Caco-2 (cell line): ENCODE measurements at regions of chr3 and their contacts with region 1.

Region 1: DNA sequence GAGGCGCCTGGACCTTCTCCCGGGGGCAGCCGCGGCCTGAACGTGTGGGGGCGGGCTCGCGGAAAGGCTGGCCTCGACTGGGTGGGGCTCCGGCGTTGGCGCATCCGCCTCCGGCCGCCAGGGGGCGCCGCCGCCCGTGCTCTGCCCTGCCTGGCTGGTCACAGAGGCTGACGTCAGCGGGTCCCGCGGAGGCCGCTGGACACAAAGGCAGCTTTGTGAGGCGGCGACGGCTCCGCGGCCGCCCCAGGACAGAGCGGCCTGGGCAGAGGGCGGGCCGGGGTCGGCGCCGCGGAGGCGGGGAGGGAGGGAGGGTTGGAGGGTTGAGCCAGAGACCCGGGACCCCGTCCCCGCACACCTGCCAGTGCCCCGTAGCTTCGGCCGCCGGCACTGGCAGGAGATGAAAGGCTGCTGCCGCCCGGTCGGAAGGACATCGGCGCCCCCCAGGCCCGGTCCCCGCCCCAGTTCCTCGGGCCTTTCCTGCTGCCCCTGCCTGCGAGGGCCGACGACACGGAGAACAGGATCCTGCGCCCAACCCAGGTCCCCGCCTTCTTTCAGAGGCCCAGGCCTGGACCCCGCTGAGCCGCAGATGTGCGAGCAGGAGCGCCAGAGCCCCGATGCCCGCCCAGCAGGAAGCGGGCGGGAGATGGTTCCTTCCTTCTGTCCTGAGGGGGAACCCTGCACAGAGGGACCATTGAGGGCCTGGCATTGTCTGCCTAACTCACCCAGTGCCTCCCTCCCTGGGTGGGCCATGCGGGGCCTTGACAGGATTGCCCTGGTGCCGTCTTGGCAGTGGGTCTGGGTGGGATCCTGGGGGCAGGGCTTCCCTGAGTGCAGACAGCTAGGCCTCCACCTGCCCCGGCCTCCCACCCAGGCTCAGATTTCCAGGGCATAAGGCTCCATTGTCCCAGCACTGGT is 8.7 kb upstream of the SEMA3B start:
- DNase-seq: peak; percentile 90 to 95
- H3K4me3 ChIP-seq: peak overlapping the region; percentile 48
- H3K4me3 Mint-ChIP-seq: peak overlapping the region; percentile 63
- H3K27ac Mint-ChIP-seq: peak overlapping the region; percentile 70
- H3K4me1 ChIP-seq: peaks cover 34% of the 10 kb centered on the region
- H3K4me1 Mint-ChIP-seq: peaks cover 12% of the 10 kb centered on the region
- H3K27me3 ChIP-seq: no peaks in the 10 kb centered on the region
- H3K27me3 Mint-ChIP-seq: no peaks in the 10 kb centered on the region
- CTCF ChIP-seq: peak; percentile 80 to 82

Region 2: DNA sequence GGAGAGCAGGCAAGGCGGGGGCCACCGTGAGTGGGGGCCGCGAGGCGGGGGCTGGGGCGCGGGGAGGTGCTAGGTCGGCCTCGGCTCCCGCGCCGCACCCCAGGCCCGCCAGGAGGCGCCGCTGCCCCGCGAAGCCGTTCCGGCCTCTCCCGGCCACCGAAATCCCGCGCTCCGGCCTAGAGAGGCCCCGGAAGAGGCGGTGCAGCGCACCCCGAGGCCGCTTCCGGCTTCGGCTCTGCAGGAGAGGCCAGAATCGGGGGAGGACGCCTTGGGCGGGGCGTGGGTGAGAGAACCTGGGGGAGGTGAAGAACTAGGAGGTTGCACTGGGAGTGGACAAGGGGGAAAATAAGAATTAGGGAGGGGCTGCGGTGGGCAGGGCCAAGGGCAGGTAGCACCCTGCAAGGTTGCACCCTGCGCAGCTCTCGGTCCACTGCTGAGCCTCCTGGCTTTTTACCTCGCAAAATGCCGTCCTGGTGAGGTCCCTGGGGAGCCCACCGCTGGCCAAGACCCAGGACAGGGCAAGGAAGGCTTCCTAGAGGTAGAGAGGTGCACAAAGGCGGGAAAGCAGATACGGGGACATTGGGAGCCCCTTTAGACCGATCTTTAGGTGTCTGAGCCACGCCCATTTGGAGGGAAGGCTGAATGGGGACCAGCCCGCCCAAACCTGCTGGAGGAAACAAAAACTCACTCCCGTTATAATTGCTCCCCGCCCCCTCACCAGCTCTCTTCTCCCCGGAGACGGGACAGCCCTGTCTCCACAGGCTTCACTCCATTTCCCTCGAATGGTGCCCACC is 32.7 kb before region 1 on chr3:
- CTCF ChIA-PET with region 1: interaction called, 9 read pairs
- POLR2A ChIA-PET with region 1: interaction called, 6 read pairs
- intact Hi-C with region 1: loop called (anchors 1 kb)
- DNase-seq: peak; percentile 97
- H3K4me3 ChIP-seq: peak overlapping the region; percentile 72
- H3K4me3 Mint-ChIP-seq: peak overlapping the region; percentile 78
- H3K27ac Mint-ChIP-seq: peak overlapping the region; percentile 78
- H3K4me1 ChIP-seq: peaks cover 6% of the 10 kb centered on the region; the same call in 1 of the 2 replicates
- H3K4me1 Mint-ChIP-seq: no peaks in the 10 kb centered on the region
- H3K27me3 ChIP-seq: no peaks in the 10 kb centered on the region
- H3K27me3 Mint-ChIP-seq: no peaks in the 10 kb centered on the region
- CTCF ChIP-seq: peak; percentile 62 to 82

Region 3: DNA sequence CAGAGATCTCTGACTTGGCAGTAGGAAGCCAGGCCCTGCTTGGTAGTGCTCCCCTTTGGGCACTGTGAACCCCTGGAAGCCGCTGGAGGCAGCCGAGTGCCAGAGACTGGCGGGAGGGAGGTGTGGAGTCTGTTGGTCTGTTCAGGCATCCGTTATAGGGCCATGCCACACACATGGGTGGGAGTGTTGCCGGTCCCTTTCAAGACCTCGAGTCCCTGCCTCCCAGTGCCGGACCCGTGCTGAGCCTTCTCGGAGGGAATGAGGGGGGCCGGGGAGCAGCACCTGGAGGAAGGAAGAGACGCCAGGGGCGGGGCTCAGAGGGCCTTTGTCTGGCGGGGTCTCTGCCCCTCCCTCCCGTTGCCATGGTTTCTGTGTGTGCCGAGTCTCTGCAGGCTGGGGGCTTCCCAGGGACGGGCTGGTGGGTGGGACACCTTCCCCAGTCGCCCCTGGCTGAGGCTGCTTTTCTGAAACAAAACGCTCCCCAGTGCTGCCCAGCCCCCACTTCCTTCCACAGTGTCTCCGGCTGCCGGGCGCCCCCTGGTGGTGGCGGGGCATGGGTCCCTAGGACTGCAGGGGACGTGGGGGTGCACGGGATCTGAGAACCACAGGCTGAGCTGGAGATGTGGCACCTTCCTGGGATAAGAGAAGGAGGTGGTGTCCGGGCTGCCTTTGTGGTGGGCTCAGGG is 14.3 kb before region 1 on chr3:
- CTCF ChIA-PET with region 1: interaction called, 10 read pairs
- POLR2A ChIA-PET with region 1: interaction called, 6 read pairs
- intact Hi-C with region 1: no loop called
- DNase-seq: peak; percentile 81 to 90
- H3K4me3 ChIP-seq: no peak overlapping the region
- H3K4me3 Mint-ChIP-seq: no peak overlapping the region
- H3K27ac Mint-ChIP-seq: peak overlapping the region; percentile 55
- H3K4me1 ChIP-seq: peaks cover 8% of the 10 kb centered on the region
- H3K4me1 Mint-ChIP-seq: no peaks in the 10 kb centered on the region
- H3K27me3 ChIP-seq: no peaks in the 10 kb centered on the region
- H3K27me3 Mint-ChIP-seq: no peaks in the 10 kb centered on the region
- CTCF ChIP-seq: peak; percentile 87 to 97

Region 4: GRCh38 chr3:50298836-50299637 is 38.8 kb after region 1 on chr3 and contains the starts of genes HYAL3 and NAA80:
- CTCF ChIA-PET with region 1: interaction called, 4 read pairs
- POLR2A ChIA-PET with region 1: interaction called, 7 read pairs
- intact Hi-C with region 1: loop called (anchors 2 kb)
- DNase-seq: peak; percentile 99
- H3K4me3 ChIP-seq: peak within 1 kb of the TSS; percentile 47
- H3K4me3 Mint-ChIP-seq: peak within 1 kb of the TSS; percentile 97
- H3K27ac Mint-ChIP-seq: peak within 1 kb of the TSS; percentile 95
- H3K4me1 ChIP-seq: peaks cover 20% of the 10 kb centered on the region
- H3K4me1 Mint-ChIP-seq: peaks cover 11% of the 10 kb centered on the region
- H3K27me3 ChIP-seq: no peaks in the 10 kb centered on the region
- H3K27me3 Mint-ChIP-seq: no peaks in the 10 kb centered on the region
- CTCF ChIP-seq: peak; percentile 15 to 26
- total RNA-seq, gene HYAL3: 5.2 and 6.8 TPM in 2 replicates
- total RNA-seq, gene NAA80: 6.7 and 8.2 TPM in 2 replicates

Region 5: GRCh38 chr3:50337191-50337841 is 77.0 kb after region 1 on chr3:
- CTCF ChIA-PET with region 1: interaction called, 7 read pairs
- POLR2A ChIA-PET with region 1: interaction called, 10 read pairs
- intact Hi-C with region 1: no loop called
- DNase-seq: peak; percentile 99
- H3K4me3 ChIP-seq: peak overlapping the region; percentile 63
- H3K4me3 Mint-ChIP-seq: peak overlapping the region; percentile 94
- H3K27ac Mint-ChIP-seq: peak overlapping the region; percentile 95
- H3K4me1 ChIP-seq: peaks cover 16% of the 10 kb centered on the region
- H3K4me1 Mint-ChIP-seq: peaks cover 11% of the 10 kb centered on the region
- H3K27me3 ChIP-seq: no peaks in the 10 kb centered on the region
- H3K27me3 Mint-ChIP-seq: no peaks in the 10 kb centered on the region
- CTCF ChIP-seq: no peak